CD8-positive, alpha-beta T cell (primary cell): ENCODE measurements at regions of chr16 and their contacts with region 1.

Region 1: GRCh38 chr16:11797166-11797956 is at the start of gene ZC3H7A:
- DNase-seq: peak; percentile 83 to 97 (median 92)
- ATAC-seq: peak; percentile 94
- H3K4me3 ChIP-seq: peak within 1 kb of the TSS; percentile 71 to 97
- H3K4me3 Mint-ChIP-seq: peak within 1 kb of the TSS; percentile 95
- H3K27ac ChIP-seq: peak within 1 kb of the TSS; percentile 82 to 99
- H3K27ac Mint-ChIP-seq: peak within 1 kb of the TSS; percentile 99
- H3K4me1 ChIP-seq: peaks cover 72% of the 10 kb centered on the region
- H3K4me1 Mint-ChIP-seq: peaks cover 68% of the 10 kb centered on the region
- H3K27me3 ChIP-seq: no peaks in the 10 kb centered on the region
- H3K27me3 Mint-ChIP-seq: no peaks in the 10 kb centered on the region
- CTCF ChIP-seq: peak; percentile 79
- total RNA-seq, gene ZC3H7A: 105 to 106 TPM

Region 2: DNA sequence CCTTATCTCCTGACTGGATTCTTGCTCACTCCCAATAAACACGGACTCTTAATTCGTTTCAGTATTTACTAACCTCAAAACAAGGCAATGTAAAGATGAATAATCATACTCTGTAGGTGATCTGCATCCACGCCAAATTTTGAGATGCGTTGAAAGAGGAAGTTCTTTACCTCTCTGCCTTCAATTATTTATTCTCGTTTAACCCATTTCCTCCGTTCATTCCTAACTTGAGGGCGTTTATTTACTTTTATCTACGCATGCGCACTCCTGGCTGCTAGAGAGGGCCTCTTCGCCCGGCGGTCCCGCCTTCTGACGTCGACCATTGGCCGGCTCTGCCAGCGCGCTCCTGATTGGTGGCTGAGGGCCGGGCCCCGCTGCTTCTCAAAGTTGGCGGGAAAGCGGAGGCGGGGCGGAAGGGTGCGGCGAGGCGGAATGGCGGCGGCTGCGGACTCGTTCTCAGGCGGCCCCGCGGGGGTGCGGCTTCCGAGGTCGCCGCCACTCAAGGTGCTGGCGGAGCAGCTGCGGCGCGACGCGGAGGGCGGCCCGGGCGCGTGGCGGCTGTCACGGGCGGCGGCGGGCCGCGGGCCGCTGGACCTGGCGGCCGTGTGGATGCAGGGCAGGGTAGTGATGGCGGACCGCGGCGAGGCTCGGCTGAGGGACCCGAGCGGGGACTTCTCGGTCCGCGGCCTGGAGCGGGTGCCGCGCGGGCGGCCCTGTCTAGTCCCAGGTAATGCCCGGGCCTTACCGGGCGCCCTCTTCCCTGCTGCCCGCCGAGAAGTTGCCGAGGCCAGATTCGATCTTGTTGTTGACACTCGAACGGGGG is 452.1 kb before region 1 on chr16 and contains the start of gene RMI2:
- CTCF ChIA-PET with region 1: no interaction called
- POLR2A ChIA-PET with region 1: no interaction called
- intact Hi-C with region 1: loop called in 1 of 2 experiments (anchors 5 kb)
- DNase-seq: peak; percentile 90 to 97 (median 95)
- ATAC-seq: peak; percentile 100
- H3K4me3 ChIP-seq: peak within 1 kb of the TSS; percentile 54 to 60
- H3K4me3 Mint-ChIP-seq: peak within 1 kb of the TSS; percentile 84
- H3K27ac ChIP-seq: no peak within 1 kb of the TSS
- H3K27ac Mint-ChIP-seq: peak within 1 kb of the TSS; percentile 83
- H3K4me1 ChIP-seq: no peaks in the 10 kb centered on the region
- H3K4me1 Mint-ChIP-seq: peaks cover 8% of the 10 kb centered on the region
- H3K27me3 ChIP-seq: no peaks in the 10 kb centered on the region
- H3K27me3 Mint-ChIP-seq: no peaks in the 10 kb centered on the region
- CTCF ChIP-seq: no peak
- total RNA-seq, gene RMI2: 0.69 to 0.73 TPM

Region 3: DNA sequence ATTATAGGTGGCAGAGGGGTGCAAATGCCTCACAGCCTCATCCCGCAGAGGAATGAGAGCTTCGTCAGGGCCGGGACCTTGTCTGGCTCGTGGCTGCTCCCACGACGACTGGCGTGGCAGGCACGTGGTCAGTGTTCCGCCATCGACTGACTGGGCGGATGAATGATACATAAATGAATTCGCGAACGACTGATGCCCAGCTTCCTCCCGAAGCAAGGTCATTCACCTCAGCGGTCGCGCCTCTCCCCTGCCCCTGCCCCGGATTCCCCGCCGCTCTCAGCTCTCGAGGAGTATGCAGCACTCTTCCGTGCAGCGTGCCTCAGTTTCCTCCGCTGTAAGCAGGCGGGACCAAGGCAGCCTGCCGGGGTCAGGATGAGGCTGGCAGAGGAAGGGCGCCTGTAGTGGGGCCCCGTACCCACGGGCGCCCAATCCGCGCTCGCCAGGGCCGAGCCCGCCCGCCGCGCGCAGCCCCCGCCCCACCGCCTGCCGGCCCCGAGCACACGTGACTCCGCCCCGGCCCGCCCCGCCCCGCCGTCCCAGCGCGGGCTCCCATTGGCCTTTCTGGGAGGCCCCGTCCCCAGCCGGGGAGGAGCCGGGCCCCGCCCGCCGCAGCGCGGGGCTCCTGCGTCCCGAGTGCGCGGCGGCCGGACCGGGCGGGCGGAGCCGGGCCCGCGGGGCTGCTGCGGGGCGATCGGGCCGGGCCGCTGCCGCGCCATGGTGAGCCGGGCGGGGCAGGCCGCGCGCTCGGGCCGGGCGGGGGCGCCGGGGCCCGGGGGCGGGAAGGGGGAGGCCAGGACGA is 129.3 kb before region 1 on chr16 and contains the start of gene SNN:
- CTCF ChIA-PET with region 1: no interaction called
- POLR2A ChIA-PET with region 1: interaction called, 4 read pairs
- intact Hi-C with region 1: loop called (anchors 2 to 5 kb)
- DNase-seq: peak; percentile 69 to 91 (median 83)
- ATAC-seq: peak; percentile 81
- H3K4me3 ChIP-seq: peak within 1 kb of the TSS; percentile 51 to 59
- H3K4me3 Mint-ChIP-seq: peak within 1 kb of the TSS; percentile 85
- H3K27ac ChIP-seq: peak within 1 kb of the TSS; percentile 62 to 70
- H3K27ac Mint-ChIP-seq: peak within 1 kb of the TSS; percentile 97
- H3K4me1 ChIP-seq: peaks cover 86% of the 10 kb centered on the region
- H3K4me1 Mint-ChIP-seq: peaks cover 78% of the 10 kb centered on the region
- H3K27me3 ChIP-seq: no peaks in the 10 kb centered on the region
- H3K27me3 Mint-ChIP-seq: no peaks in the 10 kb centered on the region
- CTCF ChIP-seq: no peak
- total RNA-seq, gene SNN: 105 to 107 TPM

Region 4: GRCh38 chr16:11783319-11784037 is 13.9 kb before region 1 on chr16:
- CTCF ChIA-PET with region 1: interaction called, 17 read pairs
- POLR2A ChIA-PET with region 1: interaction called, 26 read pairs
- intact Hi-C with region 1: loop called (anchors 1 kb)
- DNase-seq: peak in 6 of 9 experiments; percentile 17 to 93 (median 54)
- ATAC-seq: peak; percentile 81
- H3K4me3 ChIP-seq: peak overlapping the region; percentile 32 to 36
- H3K4me3 Mint-ChIP-seq: peak overlapping the region; percentile 78
- H3K27ac ChIP-seq: peak overlapping the region; percentile 82 to 96
- H3K27ac Mint-ChIP-seq: peak overlapping the region; percentile 99
- H3K4me1 ChIP-seq: peaks cover 51% of the 10 kb centered on the region
- H3K4me1 Mint-ChIP-seq: peaks cover 57% of the 10 kb centered on the region
- H3K27me3 ChIP-seq: no peaks in the 10 kb centered on the region
- H3K27me3 Mint-ChIP-seq: no peaks in the 10 kb centered on the region
- CTCF ChIP-seq: no peak

Region 5: GRCh38 chr16:11915644-11916523 is 118.5 kb after region 1 on chr16 and contains the start of gene GSPT1:
- CTCF ChIA-PET with region 1: no interaction called
- POLR2A ChIA-PET with region 1: interaction called, 6 read pairs
- intact Hi-C with region 1: loop called (anchors 1 to 5 kb)
- DNase-seq: peak; percentile 98 to 100 (median 99)
- ATAC-seq: peak; percentile 89
- H3K4me3 ChIP-seq: peak within 1 kb of the TSS; percentile 52 to 68
- H3K4me3 Mint-ChIP-seq: peak within 1 kb of the TSS; percentile 94
- H3K27ac ChIP-seq: peak within 1 kb of the TSS; percentile 68 to 75
- H3K27ac Mint-ChIP-seq: peak within 1 kb of the TSS; percentile 98
- H3K4me1 ChIP-seq: peaks cover 24% of the 10 kb centered on the region
- H3K4me1 Mint-ChIP-seq: peaks cover 29% of the 10 kb centered on the region
- H3K27me3 ChIP-seq: no peaks in the 10 kb centered on the region
- H3K27me3 Mint-ChIP-seq: no peaks in the 10 kb centered on the region
- CTCF ChIP-seq: no peak
- total RNA-seq, gene GSPT1: 296 to 297 TPM